A549 (cell line): ENCODE measurements at regions of chr15 and their contacts with region 1.

Region 1: GRCh38 chr15:60326824-60327654 is 70.7 kb downstream of the ANXA2 start:
- DNase-seq: peak in 1 of 2 experiments; percentile 67
- ATAC-seq: peak; percentile 56 to 72; a peak in 5 of 6 replicates
- H3K4me3 ChIP-seq: no peak overlapping the region
- H3K27ac ChIP-seq: no peak overlapping the region
- H3K4me1 ChIP-seq: peaks cover 7% of the 10 kb centered on the region
- CTCF ChIP-seq: peak; percentile 99
- EP300 ChIP-seq: no peak
- POLR2A ChIP-seq: no peak
- RAD21 ChIP-seq: peak; percentile 96 to 98

Region 2: DNA sequence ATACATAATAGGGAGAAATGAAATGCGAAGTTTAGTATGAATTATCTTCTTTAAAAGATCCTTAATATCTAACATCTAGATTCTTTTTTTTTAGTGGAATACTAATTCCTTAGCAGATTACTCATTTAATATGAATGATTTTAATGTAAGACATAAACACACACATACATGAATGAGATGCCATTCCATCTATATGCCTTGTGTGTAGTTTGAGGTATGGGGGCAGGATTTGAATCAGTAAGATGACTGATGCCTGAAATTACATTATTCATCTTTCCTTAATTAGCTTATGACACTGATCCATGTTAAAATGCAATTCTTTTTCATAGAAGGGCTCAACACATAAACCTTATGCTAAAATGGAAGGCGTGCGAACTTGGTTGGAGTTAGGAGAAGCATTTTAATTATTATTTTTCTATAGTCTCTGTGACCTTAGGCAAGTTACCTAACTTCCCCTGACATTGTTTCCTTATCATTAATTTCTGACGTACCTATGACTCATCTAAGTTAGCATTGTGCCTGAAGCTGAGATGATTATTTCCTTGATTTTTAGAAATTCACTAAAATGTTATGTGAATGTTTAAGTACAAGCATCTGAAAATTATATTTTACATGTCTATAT is 627.1 kb before region 1 on chr15:
- CTCF ChIA-PET with region 1: interaction called, 11 read pairs
- POLR2A ChIA-PET with region 1: no interaction called
- DNase-seq: peak; percentile 39 to 42
- ATAC-seq: peak in 1 of 2 experiments; percentile 21; a peak in 1 of 6 replicates
- H3K4me3 ChIP-seq: no peak overlapping the region
- H3K27ac ChIP-seq: peak overlapping the region; percentile 8; a peak in 2 of 6 replicates
- H3K4me1 ChIP-seq: peaks cover 69% of the 10 kb centered on the region
- CTCF ChIP-seq: no peak
- EP300 ChIP-seq: no peak
- POLR2A ChIP-seq: no peak
- RAD21 ChIP-seq: no peak

Region 3: DNA sequence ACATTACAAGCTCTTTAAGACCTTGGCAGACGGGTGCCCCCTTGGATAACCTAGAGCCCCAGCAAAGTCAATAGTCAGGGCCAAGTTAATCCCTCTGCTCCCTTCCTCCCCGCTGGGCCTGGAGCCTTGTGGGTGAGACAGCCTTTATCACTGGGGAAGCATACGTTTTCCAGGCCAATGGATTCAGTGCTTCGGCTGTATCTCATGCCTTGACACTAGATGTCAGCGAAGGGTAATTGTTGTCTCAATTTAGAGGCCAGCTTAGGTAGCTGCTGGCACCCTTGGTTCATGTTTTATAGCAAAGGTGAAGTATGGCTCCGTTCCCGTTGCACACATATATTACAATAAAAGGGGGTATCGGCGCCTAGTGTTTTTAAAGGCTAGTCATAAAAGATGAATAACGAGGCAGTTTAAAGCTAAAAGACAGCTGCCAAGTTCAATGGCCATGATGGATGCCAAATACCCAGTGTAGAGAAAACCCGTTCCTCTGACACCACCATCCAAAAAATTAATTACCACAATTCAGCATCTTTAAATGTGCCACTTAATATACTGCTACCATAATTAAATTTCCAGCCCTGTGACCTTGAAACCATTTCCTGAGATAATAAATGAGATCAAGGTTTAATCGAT is 585.6 kb before region 1 on chr15:
- CTCF ChIA-PET with region 1: interaction called, 54 read pairs
- POLR2A ChIA-PET with region 1: no interaction called
- DNase-seq: peak in 1 of 2 experiments; percentile 40
- ATAC-seq: peak; percentile 68 to 88
- H3K4me3 ChIP-seq: no peak overlapping the region
- H3K27ac ChIP-seq: no peak overlapping the region
- H3K4me1 ChIP-seq: no peaks in the 10 kb centered on the region
- CTCF ChIP-seq: peak; percentile 30; the same call in 1 of the 3 replicates
- EP300 ChIP-seq: no peak
- POLR2A ChIP-seq: no peak
- RAD21 ChIP-seq: peak; percentile 40 to 62; a peak in 4 of 5 replicates

Region 4: DNA sequence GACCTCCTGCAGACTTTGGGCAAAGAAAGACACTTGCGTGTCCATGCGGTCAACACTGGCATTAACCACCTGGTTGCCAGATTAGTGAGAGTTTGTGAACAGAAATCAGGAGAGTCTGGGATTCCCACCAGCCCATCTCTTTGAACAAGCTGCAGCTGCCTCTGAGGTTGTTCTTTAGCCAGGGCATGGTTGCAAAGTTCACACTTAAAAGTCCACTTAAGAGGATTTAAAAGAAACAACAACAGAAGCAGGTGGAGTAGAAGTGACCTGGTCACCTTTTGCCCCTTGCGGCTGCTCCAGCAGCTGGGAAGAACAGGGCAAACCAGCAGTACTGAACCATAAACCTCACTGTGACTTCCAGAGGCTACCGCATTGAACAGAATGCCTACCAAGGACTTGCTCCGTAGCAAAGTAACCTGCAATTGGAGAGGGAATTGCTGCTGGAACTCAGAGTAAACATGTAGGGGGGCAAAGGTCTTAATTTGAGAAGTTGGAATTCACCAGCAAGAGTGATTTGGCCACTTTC is 225.6 kb before region 1 on chr15:
- CTCF ChIA-PET with region 1: no interaction called
- POLR2A ChIA-PET with region 1: no interaction called
- DNase-seq: no peak
- ATAC-seq: no peak
- H3K4me3 ChIP-seq: no peak overlapping the region
- H3K27ac ChIP-seq: no peak overlapping the region
- H3K4me1 ChIP-seq: no peaks in the 10 kb centered on the region
- CTCF ChIP-seq: no peak
- EP300 ChIP-seq: no peak
- POLR2A ChIP-seq: no peak
- RAD21 ChIP-seq: no peak

Region 5: DNA sequence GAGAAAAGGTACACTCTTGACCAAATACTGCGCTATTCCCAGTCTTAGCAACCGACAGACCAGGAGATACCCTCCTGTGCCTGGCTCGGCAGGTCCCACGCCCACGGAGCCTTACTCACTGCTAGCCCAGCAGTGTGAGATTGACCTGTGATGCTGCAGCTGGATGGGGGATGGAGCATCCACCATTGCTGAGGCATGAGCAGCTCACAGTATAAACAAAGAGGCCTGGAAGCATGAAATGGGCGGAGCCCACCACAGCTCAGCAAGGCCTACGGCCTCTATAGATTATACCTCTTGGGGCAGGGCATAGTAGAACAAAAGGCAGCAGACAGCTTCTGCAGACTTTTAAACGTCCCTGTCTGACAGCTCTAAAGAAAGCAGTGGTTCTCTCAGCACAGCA is 89.6 kb before region 1 on chr15:
- CTCF ChIA-PET with region 1: no interaction called
- POLR2A ChIA-PET with region 1: no interaction called
- DNase-seq: no peak
- ATAC-seq: no peak
- H3K4me3 ChIP-seq: no peak overlapping the region
- H3K27ac ChIP-seq: no peak overlapping the region
- H3K4me1 ChIP-seq: no peaks in the 10 kb centered on the region
- CTCF ChIP-seq: no peak
- EP300 ChIP-seq: no peak
- POLR2A ChIP-seq: no peak
- RAD21 ChIP-seq: no peak

Region 6: DNA sequence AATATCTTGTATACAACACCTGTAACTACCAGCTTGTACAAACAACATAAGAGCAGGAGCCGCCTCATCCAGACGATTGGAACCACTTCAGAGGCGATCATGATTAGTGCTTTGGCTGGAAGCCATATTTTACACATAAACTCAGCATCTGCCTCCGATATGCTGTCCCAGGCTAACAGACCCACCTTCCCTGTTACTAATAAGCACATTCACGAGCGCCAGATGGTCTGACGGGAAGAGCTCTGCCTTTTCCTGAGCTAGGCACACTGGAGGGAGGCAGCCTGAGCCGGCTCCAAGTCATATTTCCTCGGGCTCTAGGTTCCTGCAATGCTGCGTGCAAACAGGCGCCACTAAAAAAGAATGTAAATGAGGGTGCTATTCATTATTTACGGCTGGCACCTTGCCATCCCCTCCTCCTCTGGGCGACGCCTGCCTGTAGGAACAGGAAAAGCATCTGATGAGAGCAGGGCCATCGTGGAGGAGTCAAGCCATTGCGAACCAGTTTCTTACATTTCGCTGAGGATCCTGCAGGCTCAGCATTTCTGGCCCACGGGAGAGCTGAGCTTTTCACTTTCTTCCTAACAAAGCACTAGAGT is 27.5 kb before region 1 on chr15:
- CTCF ChIA-PET with region 1: interaction called, 17 read pairs
- POLR2A ChIA-PET with region 1: no interaction called
- DNase-seq: peak in 1 of 2 experiments; percentile 12
- ATAC-seq: peak; percentile 50 to 54; a peak in 5 of 6 replicates
- H3K4me3 ChIP-seq: no peak overlapping the region
- H3K27ac ChIP-seq: no peak overlapping the region
- H3K4me1 ChIP-seq: no peaks in the 10 kb centered on the region
- CTCF ChIP-seq: no peak
- EP300 ChIP-seq: no peak
- POLR2A ChIP-seq: no peak
- RAD21 ChIP-seq: no peak

Region 7: GRCh38 chr15:60351066-60351465 is 24.0 kb after region 1 on chr15:
- CTCF ChIA-PET with region 1: interaction called, 10 read pairs
- POLR2A ChIA-PET with region 1: no interaction called
- DNase-seq: peak in 1 of 2 experiments; percentile 28
- ATAC-seq: peak; percentile 40 to 46
- H3K4me3 ChIP-seq: no peak overlapping the region
- H3K27ac ChIP-seq: peak overlapping the region in 1 of 2 experiments; percentile 58; a peak in 2 of 6 replicates
- H3K4me1 ChIP-seq: peaks cover 99% of the 10 kb centered on the region
- CTCF ChIP-seq: no peak
- EP300 ChIP-seq: no peak
- POLR2A ChIP-seq: no peak
- RAD21 ChIP-seq: no peak

Region 8: GRCh38 chr15:60573936-60574335 is 246.9 kb after region 1 on chr15:
- CTCF ChIA-PET with region 1: no interaction called
- POLR2A ChIA-PET with region 1: no interaction called
- DNase-seq: no peak
- ATAC-seq: no peak
- H3K4me3 ChIP-seq: no peak overlapping the region
- H3K27ac ChIP-seq: no peak overlapping the region
- H3K4me1 ChIP-seq: peaks cover 19% of the 10 kb centered on the region
- CTCF ChIP-seq: no peak
- EP300 ChIP-seq: no peak
- POLR2A ChIP-seq: no peak
- RAD21 ChIP-seq: no peak